H1 (cell line): ENCODE measurements at regions of chr2 and their contacts with region 1.

Region 1: DNA sequence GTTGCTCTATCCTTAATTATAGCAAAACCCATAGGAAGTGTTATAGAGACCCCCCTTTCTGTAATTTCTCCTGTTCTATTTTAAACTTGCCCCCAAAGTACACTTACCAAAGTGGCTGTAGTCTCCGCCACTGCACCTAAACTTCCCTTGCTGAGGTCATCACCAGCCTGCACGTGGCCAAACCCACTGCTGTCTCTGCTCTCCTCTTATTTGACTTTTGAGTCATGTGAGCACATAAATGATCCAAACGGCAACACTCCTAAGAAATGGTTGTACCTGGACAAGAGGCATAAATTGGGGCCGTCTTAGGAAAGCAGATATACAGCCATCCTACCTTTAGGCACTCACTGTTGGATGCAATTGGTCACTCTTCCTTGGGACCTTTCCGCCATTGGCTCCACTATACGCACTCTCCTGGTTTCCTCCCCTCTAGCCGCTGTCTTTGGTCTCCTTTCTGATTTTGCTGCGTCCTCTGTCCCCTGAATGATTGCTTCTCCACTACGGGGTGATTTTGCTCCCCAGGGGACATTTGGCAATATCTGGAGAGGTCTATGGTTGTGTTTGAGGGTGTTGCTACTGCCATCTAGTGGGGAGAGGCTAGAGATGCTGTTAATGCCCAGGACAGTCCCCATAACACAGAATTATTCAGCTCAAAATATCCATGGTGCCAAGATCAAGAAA is 19.2 kb upstream of the IL36G start:
- DNase-seq: peak in 1 of 2 experiments; percentile 49
- H3K4me3 ChIP-seq: no peak overlapping the region
- H3K27ac ChIP-seq: no peak overlapping the region
- H3K4me1 ChIP-seq: no peaks in the 10 kb centered on the region
- H3K27me3 ChIP-seq: no peaks in the 10 kb centered on the region; a peak in 1 of 7 replicates
- CTCF ChIP-seq: peak in 2 of 3 experiments; percentile 75 to 77; a peak in 3 of 4 replicates
- EP300 ChIP-seq: no peak
- POLR2A ChIP-seq: no peak
- RAD21 ChIP-seq: peak; percentile 56 to 72

Region 2: DNA sequence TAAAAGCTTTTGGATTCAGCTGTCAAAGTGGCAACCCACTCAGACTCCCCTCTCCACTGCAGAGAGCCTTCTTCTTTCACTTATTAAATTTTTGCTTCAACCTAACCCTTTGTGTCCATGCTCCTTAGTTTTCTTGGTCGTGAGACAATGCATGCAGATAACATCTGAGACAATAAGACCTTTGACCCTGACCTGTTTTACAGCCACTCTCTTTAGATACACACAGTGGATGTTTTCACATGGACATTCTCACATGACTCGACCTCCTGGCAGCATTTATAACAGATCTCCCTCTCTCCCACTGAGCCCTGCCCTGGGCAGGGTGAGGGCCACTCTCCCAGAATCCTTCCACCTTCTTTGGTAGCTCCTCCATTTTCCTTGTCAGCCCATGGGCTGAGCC is 11.2 kb before region 1 on chr2:
- CTCF ChIA-PET with region 1: interaction called, 45 read pairs
- POLR2A ChIA-PET with region 1: no interaction called
- DNase-seq: no peak
- H3K4me3 ChIP-seq: no peak overlapping the region
- H3K27ac ChIP-seq: no peak overlapping the region
- H3K4me1 ChIP-seq: no peaks in the 10 kb centered on the region
- H3K27me3 ChIP-seq: no peaks in the 10 kb centered on the region
- CTCF ChIP-seq: no peak
- EP300 ChIP-seq: no peak
- POLR2A ChIP-seq: no peak
- RAD21 ChIP-seq: no peak

Region 3: GRCh38 chr2:112972423-112973086 is 14.0 kb after region 1 on chr2:
- CTCF ChIA-PET with region 1: interaction called, 23 read pairs
- POLR2A ChIA-PET with region 1: no interaction called
- DNase-seq: no peak
- H3K4me3 ChIP-seq: no peak overlapping the region
- H3K27ac ChIP-seq: no peak overlapping the region
- H3K4me1 ChIP-seq: no peaks in the 10 kb centered on the region
- H3K27me3 ChIP-seq: no peaks in the 10 kb centered on the region
- CTCF ChIP-seq: no peak
- EP300 ChIP-seq: no peak
- POLR2A ChIP-seq: no peak
- RAD21 ChIP-seq: no peak

Region 4: GRCh38 chr2:112977559-112978056 is 19.0 kb after region 1 on chr2 and contains the start of gene IL36G:
- CTCF ChIA-PET with region 1: interaction called, 13 read pairs
- POLR2A ChIA-PET with region 1: no interaction called
- DNase-seq: no peak
- H3K4me3 ChIP-seq: no peak within 1 kb of the TSS
- H3K27ac ChIP-seq: no peak within 1 kb of the TSS
- H3K4me1 ChIP-seq: no peaks in the 10 kb centered on the region
- H3K27me3 ChIP-seq: no peaks in the 10 kb centered on the region
- CTCF ChIP-seq: no peak
- EP300 ChIP-seq: no peak
- POLR2A ChIP-seq: no peak
- RAD21 ChIP-seq: no peak
- total RNA-seq, gene IL36G: not detected in 2 replicates